Dendritic cell treated with granulocyte-macrophage colony-stimulating factor and Interleukin-4, amounts not matched to agents 40 ng/mL and 50 ng/mL, for 4 days (primary cell): ENCODE measurements at regions of chr7 and their contacts with region 1.

Region 1: DNA sequence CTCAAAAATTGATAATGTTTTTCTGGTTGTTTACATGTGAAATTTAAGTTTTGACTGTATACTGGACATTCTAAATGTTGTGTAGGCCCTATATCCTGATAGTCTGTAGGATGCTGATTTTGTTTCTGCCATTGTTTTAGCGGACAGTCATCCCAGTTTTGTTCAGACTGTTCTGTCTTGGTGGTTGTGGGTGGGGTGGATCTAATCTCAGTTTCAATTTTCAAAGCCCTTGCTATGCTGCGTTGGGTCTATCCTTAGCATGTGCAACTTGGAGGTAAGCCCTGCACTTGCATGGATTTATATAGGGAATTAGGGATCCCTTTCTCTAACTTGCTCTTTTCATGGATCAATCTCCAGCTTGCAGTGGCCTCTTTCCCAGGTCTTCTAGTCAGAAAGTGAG is 19.1 kb downstream of the DBF4 start:
- H3K4me3 Mint-ChIP-seq: no peak overlapping the region
- H3K27ac Mint-ChIP-seq: no peak overlapping the region
- H3K4me1 Mint-ChIP-seq: no peaks in the 10 kb centered on the region
- H3K27me3 Mint-ChIP-seq: no peaks in the 10 kb centered on the region

Region 2: DNA sequence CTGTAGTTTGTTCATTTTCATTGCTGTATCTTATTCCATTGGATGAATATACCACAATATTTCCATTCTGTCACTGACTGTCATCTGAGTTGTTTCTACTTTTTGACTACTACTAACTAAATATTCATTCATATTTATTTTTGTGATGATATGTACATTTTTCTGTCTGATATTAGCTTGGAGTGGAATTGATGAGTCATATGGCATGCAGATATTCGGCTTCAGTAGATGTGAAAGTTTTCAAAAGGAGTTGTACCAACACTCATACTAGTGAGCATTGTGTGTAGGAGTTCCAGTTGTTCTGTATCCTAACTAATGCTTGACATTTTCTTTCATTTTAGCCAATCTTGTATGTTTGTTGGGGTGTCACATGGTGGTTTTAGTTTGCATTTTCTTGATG is 259.4 kb before region 1 on chr7:
- intact Hi-C with region 1: loop called (anchors 10 kb)
- H3K4me3 Mint-ChIP-seq: no peak overlapping the region
- H3K27ac Mint-ChIP-seq: no peak overlapping the region
- H3K4me1 Mint-ChIP-seq: no peaks in the 10 kb centered on the region
- H3K27me3 Mint-ChIP-seq: peaks cover 2% of the 10 kb centered on the region

Region 3: DNA sequence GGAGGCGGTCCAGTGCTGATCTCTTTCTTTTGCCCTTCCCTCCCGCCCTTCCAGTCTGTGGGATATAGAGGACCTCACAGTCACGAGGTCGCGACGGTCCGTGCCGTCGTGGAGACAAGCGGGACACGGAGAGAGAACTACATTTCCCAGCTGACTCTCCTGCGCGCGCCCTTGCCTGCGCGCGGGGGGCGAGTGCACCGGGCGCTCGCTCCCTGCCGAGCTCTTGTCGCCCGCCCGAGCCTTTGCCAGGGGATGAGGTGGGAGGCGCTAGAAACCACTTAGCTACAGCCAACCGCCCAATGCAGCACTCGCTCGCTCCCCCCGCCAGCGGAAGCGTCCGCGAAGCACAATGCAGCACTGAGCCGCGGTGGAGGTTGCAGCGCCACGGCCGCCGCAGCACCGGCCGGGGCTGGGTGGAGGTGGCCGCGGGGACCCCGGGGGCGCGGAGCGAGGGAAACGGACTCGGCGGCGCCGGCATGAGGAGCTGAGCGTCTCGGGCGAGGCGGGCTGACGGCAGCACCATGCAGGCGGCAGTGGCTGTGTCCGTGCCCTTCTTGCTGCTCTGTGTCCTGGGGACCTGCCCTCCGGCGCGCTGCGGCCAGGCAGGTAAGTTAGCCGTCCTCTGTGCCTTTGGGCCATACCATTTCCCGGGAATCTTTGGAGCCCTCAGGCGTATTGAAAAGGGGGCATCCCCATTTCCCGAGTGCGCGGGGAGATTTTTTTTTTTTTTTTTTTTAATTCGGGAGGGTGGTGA is 38.8 kb after region 1 on chr7 and contains the start of gene ADAM22:
- intact Hi-C with region 1: no loop called
- H3K4me3 Mint-ChIP-seq: peak within 1 kb of the TSS; percentile 80
- H3K27ac Mint-ChIP-seq: no peak within 1 kb of the TSS
- H3K4me1 Mint-ChIP-seq: peaks cover 17% of the 10 kb centered on the region
- H3K27me3 Mint-ChIP-seq: peaks cover 20% of the 10 kb centered on the region

Region 4: GRCh38 chr7:88001744-88002530 is 106.6 kb after region 1 on chr7:
- intact Hi-C with region 1: no loop called
- H3K4me3 Mint-ChIP-seq: no peak overlapping the region
- H3K27ac Mint-ChIP-seq: no peak overlapping the region
- H3K4me1 Mint-ChIP-seq: no peaks in the 10 kb centered on the region
- H3K27me3 Mint-ChIP-seq: no peaks in the 10 kb centered on the region

Region 5: DNA sequence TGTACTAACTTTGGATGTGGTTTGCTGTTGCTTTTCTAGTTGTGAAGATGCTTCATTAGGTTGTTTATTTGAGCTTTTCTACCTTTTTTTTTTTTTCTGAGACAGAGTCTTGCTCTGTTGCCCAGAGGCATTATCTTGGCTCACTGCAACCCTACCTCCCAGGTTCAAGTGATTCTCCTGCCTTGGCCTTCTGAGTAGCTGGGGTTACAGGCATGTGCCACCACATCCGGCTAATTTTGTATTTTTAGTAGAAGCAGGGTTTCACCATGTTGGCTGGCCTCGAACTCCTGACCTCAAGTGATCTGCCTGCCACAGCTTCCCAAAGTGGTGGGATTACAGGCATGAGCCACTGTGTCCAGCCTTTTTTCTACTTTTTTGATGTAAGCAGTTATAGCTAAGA is 132.4 kb after region 1 on chr7:
- intact Hi-C with region 1: no loop called
- H3K4me3 Mint-ChIP-seq: no peak overlapping the region
- H3K27ac Mint-ChIP-seq: no peak overlapping the region
- H3K4me1 Mint-ChIP-seq: no peaks in the 10 kb centered on the region
- H3K27me3 Mint-ChIP-seq: no peaks in the 10 kb centered on the region

Region 6: DNA sequence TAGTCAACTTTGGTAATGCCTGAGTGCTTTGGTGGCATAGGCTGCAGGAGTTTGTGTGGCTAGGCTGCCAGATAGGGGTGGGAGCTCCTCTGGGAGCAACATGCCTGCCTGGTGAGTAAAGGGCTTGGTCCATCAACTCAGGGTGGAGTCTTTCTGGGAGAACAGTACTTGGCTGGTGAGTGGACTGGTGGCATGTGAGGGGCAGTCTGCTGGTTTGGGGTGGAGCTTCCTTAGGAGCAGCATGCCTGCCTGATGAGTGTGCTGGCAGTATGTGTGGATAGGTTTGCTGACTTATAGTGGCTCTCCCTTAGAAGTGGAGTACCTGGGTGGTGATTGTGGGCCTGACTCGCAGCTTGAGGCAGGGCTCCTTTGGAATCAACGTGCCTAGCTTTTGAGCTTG is 359.4 kb after region 1 on chr7:
- intact Hi-C with region 1: no loop called
- H3K4me3 Mint-ChIP-seq: no peak overlapping the region
- H3K27ac Mint-ChIP-seq: no peak overlapping the region
- H3K4me1 Mint-ChIP-seq: peaks cover 25% of the 10 kb centered on the region
- H3K27me3 Mint-ChIP-seq: no peaks in the 10 kb centered on the region